HepG2 (cell line): ENCODE measurements at regions of chr7 and their contacts with region 1.

Region 1: DNA sequence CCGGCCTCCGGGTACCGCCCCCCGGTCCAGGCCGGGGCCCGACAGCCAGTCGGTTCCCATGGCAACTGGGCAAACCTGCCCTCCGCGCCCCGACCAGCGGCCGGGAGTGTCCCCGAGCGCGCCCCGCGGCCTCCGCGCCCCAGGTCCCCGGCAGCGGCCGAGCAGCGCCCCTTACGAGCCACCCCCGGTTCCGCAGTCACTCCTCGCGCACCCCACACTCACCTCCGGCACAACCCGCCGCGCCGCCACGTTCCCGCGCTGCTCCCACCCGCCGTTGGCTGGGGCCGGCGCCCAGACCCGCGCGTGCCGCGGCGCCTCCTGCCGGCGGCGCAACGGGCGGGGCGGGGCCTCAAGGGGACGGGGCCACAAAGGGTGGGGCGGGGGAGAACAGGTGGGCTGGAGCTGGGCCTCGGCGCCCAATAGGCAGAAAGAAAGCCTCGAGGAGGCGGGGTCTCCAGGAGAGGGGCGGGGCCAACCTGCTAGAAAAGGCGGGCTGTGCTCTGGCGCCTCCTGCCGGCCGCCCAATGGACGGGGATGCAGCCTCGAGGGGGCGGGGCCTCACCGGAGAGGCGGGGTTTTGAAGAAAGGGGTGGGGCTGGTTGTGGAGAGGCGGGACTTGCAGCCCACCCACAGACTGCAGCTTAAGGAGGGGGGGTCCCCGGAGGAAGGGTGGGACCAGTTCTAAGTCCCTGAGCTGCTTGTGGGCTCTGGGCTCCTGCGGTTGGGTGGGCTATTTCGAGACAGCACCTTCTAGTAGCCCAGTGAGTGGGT is at the start of gene RADIL:
- DNase-seq: peak; percentile 82
- ATAC-seq: peak; percentile 91
- H3K4me3 ChIP-seq: peak within 1 kb of the TSS; percentile 34 to 69 (median 40); a peak in 4 of 6 replicates
- H3K27ac ChIP-seq: no peak within 1 kb of the TSS
- H3K4me1 ChIP-seq: peaks cover 23% of the 10 kb centered on the region
- H3K27me3 ChIP-seq: peaks cover 7 to 36% of the 10 kb centered on the region in 2 experiments
- CTCF ChIP-seq: peak; percentile 90
- EP300 ChIP-seq: no peak
- POLR2A ChIP-seq: no peak
- RAD21 ChIP-seq: peak; percentile 73
- total RNA-seq, gene RADIL: 0.09 and 0.52 TPM in 2 replicates

Region 2: GRCh38 chr7:4549681-4550080 is 333.9 kb before region 1 on chr7:
- CTCF ChIA-PET with region 1: no interaction called
- POLR2A ChIA-PET with region 1: no interaction called
- in situ Hi-C with region 1: no loop called
- intact Hi-C with region 1: no loop called
- DNase-seq: no peak
- ATAC-seq: no peak
- H3K4me3 ChIP-seq: no peak overlapping the region
- H3K27ac ChIP-seq: no peak overlapping the region
- H3K4me1 ChIP-seq: no peaks in the 10 kb centered on the region
- H3K27me3 ChIP-seq: no peaks in the 10 kb centered on the region; a peak in 1 of 5 replicates
- CTCF ChIP-seq: no peak
- EP300 ChIP-seq: no peak
- POLR2A ChIP-seq: no peak
- RAD21 ChIP-seq: no peak

Region 3: DNA sequence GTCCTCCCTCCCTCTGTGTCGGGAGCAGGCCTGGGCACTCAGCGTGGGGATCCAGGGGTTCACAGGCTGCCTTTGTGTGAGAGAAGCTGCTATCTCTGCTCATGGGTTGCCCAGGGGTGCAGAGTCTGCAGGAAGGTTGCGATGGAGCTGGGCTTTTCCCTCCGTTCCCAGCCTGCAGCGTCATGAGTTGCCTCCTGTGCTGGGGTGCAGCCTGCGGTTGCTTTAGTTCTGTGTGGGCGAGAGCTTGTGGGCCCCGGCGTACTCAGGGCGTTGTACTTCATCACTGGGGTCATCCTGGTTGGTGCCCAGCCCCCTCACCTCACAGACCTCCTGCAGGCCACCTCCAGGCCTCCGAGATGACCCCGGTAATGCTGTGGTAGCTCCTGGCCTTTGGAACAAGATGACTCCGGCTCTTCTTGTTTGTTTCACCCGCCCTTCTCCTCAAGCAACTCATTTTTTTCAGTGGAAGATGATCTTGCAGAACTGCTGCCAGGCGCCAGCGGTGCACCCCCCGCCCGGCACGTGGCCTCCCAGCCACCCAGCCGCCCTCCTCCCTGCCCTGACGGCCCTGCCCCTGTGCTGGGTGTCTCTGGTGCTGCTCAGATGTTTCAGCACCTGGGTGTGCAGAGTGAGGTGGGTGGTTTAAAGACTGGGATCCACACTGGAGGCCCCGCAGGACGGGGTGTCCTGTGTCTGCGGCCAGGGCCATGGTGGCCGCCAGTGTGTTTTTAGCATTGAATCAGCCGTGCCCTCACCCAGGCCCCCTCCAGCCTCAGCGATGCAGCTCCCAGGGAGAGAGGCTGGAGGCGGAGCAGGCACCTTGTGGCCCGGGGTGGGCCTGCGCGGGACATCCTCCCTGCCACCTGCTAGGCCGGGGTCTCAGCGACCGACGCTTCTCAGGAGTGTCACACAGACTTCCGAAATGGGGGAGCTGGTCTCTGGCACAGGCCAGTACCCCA is 100.9 kb before region 1 on chr7:
- CTCF ChIA-PET with region 1: no interaction called
- POLR2A ChIA-PET with region 1: no interaction called
- in situ Hi-C with region 1: no loop called
- intact Hi-C with region 1: no loop called
- DNase-seq: no peak
- ATAC-seq: no peak
- H3K4me3 ChIP-seq: no peak overlapping the region
- H3K27ac ChIP-seq: no peak overlapping the region
- H3K4me1 ChIP-seq: peaks cover 8% of the 10 kb centered on the region; the same call in 1 of the 2 replicates
- H3K27me3 ChIP-seq: no peaks in the 10 kb centered on the region
- CTCF ChIP-seq: no peak
- EP300 ChIP-seq: no peak
- POLR2A ChIP-seq: no peak
- RAD21 ChIP-seq: no peak

Region 4: DNA sequence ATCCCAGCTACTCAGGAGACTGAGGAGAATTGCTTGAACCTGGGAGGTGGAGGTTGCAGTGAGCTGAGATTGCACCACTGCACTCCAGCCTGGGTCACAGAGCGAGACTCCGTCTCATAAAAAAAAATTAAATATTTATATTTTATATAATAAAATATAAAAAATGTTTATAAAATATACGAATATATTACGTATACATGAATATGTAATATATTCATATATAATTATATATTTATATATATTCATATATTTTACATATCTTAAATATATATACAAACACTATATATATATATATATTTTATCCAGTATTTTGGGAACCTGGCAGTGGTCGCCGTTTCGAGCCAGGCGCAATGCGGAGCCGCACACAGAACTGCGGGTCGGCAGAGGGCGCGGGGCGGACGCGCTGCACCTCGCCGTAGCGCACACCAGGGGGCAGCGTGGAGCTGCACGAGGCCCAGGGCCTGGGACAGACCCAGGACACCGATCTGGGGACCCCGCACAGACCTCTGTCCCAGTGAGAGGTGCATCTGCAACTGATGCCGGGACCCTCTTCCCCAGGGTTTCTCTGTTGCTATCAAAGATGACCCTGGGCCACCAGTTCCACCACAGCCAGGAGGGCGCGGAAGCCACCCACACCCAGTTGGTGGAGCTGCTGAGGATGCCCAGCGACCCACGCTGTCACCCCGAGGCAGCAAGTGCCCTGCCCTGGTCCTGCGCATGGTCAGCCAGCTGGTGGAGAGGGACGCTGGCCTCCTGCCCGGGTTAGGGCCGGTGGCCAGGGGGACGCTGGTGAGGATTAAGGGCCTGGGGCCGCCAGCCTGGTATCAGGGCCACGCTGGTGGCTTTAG is 85.5 kb before region 1 on chr7:
- CTCF ChIA-PET with region 1: interaction called, 13 read pairs
- POLR2A ChIA-PET with region 1: no interaction called
- in situ Hi-C with region 1: no loop called
- intact Hi-C with region 1: no loop called
- DNase-seq: peak; percentile 31
- ATAC-seq: peak; percentile 76
- H3K4me3 ChIP-seq: peak overlapping the region in 1 of 3 experiments; percentile 26; a peak in 1 of 6 replicates
- H3K27ac ChIP-seq: no peak overlapping the region
- H3K4me1 ChIP-seq: peaks cover 8% of the 10 kb centered on the region
- H3K27me3 ChIP-seq: peaks cover 1 to 12% of the 10 kb centered on the region in 2 experiments; a peak in 2 of 5 replicates
- CTCF ChIP-seq: peak; percentile 92
- EP300 ChIP-seq: no peak
- POLR2A ChIP-seq: no peak
- RAD21 ChIP-seq: peak; percentile 82

Region 5: DNA sequence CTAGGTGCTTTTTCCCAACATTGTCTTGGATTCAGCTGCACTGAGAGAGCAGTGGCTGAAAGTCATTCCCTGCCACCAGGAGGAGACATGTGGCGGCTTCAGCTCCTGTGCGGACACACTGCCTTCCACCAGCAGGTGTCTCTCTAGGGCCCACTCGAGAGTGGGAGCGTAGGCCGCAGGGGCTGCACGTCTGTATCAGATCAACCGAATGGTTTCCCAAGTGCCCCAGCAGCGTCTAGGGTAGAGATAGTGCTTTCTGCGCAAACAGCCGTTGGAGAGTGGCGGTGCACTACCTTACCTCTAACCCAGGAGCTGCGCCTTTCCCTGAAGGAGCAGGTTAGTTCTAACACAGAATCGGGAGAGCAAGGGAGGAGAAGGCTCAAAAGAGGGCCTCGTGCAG is 53.4 kb before region 1 on chr7:
- CTCF ChIA-PET with region 1: interaction called, 47 read pairs
- POLR2A ChIA-PET with region 1: no interaction called
- in situ Hi-C with region 1: no loop called
- intact Hi-C with region 1: loop called (anchors 1 kb)
- DNase-seq: peak; percentile 78
- ATAC-seq: peak; percentile 97
- H3K4me3 ChIP-seq: no peak overlapping the region
- H3K27ac ChIP-seq: no peak overlapping the region
- H3K4me1 ChIP-seq: no peaks in the 10 kb centered on the region
- H3K27me3 ChIP-seq: peaks cover 0 to 20% of the 10 kb centered on the region in 2 experiments; a peak in 2 of 5 replicates
- CTCF ChIP-seq: peak; percentile 100
- EP300 ChIP-seq: no peak
- POLR2A ChIP-seq: no peak
- RAD21 ChIP-seq: peak; percentile 96

Region 6: GRCh38 chr7:4849369-4849768 is 34.2 kb before region 1 on chr7:
- CTCF ChIA-PET with region 1: interaction called, 3 read pairs
- POLR2A ChIA-PET with region 1: no interaction called
- in situ Hi-C with region 1: no loop called
- intact Hi-C with region 1: loop called (anchors 5 kb)
- DNase-seq: peak; percentile 48
- ATAC-seq: peak; percentile 77
- H3K4me3 ChIP-seq: no peak overlapping the region
- H3K27ac ChIP-seq: no peak overlapping the region
- H3K4me1 ChIP-seq: no peaks in the 10 kb centered on the region
- H3K27me3 ChIP-seq: peaks cover 0 to 26% of the 10 kb centered on the region in 2 experiments; a peak in 2 of 5 replicates
- CTCF ChIP-seq: peak; percentile 76
- EP300 ChIP-seq: no peak
- POLR2A ChIP-seq: no peak
- RAD21 ChIP-seq: 0 out of 2 replicates have a peak, but pooled peaks have one; percentile 17